Activated CD4-positive, alpha-beta memory T cell treated with anti-CD3 and anti-CD28 coated beads for 36 hours (primary cell): ENCODE measurements at regions of chr11 and their contacts with region 1.

Region 1: DNA sequence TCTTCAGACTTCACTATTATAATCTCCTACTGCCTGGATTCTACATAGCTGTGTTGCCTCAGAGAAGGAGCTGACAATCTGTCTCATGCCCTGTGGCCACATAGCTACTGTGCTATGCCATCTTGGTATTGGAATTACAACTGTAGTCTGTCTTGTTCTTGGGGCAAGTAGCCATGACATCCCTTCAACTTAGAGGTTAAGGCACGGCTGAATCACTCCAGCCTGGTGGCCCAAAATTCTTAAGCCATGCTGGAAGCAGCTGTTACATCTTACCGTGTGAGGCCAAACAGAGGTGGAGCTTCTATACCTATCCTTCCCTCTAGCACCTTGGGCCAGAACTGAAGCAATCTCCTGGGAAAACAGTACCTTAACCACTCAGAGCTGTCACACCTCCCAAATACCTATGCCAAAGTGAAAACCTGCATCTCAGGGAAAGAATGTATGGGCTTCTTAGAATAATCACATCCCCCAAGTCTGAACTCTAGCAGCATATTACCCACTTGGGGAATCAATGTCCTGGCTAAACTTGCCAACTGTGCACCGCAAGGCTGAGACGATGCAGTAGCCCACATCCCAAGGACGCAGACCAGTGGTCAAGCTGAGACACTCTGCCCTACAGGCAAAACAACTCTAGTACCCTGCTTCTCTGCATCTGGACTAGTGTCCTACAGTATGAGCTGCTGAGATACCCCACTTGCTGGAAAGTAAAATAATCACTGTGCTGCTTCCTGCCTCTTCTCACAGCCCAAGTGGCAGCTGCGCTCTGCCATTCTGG is 14.6 kb downstream of the CARD18 start:
- DNase-seq: no peak
- H3K4me3 Mint-ChIP-seq: no peak overlapping the region
- H3K27ac Mint-ChIP-seq: no peak overlapping the region
- H3K4me1 Mint-ChIP-seq: no peaks in the 10 kb centered on the region
- H3K27me3 Mint-ChIP-seq: no peaks in the 10 kb centered on the region

Region 2: GRCh38 chr11:106208775-106209174 is 1083.8 kb after region 1 on chr11:
- CTCF ChIA-PET with region 1: no interaction called
- POLR2A ChIA-PET with region 1: no interaction called
- intact Hi-C with region 1: loop called (anchors 5 kb)
- DNase-seq: no peak
- H3K4me3 Mint-ChIP-seq: no peak overlapping the region
- H3K27ac Mint-ChIP-seq: no peak overlapping the region
- H3K4me1 Mint-ChIP-seq: no peaks in the 10 kb centered on the region
- H3K27me3 Mint-ChIP-seq: no peaks in the 10 kb centered on the region